ENCODE measurements at regions of chr12 and their contacts with region 1.

Region 1: DNA sequence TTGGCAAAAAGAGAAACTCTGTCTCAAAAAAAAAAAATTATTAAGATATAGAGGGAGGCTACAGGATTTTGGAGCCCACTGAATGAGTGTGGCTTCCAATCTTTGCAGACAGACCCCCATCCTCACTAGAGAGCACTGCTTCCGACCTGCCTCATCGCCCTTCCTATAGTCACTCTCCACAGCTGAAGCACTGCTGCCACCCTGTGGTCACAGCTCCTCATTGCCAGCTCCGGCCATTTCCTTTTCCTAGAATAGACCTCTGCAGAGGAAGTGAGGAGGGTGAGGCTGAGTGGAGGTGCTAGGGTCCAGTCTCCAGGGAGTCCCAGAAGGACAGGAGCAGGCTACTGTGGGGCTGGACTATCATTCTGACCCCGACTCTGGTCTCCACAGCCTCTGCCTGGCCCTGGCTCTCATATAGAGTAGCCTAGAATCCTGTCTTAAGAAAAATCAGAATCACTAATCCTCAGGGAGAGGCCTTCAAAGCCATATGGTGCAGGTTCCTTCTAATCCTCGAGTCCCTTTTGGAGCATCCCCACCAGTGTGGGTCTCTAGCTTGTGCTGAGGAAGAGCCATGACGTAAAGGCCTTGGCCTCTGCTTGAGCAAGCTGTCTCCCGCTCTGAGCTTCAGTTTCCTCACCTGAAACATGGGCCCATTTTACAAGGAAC is 1.4 kb upstream of the NPFF start:
- DNase-seq: peak; percentile 69 to 78 (median 75)
- H3K4me3 ChIP-seq: no peak overlapping the region
- H3K4me3 Mint-ChIP-seq: peak overlapping the region in 1 of 8 donors; percentile 2
- H3K27ac ChIP-seq: peak overlapping the region; percentile 16
- H3K27ac Mint-ChIP-seq: peak overlapping the region; percentile 14 to 70 (median 47)
- H3K4me1 ChIP-seq: peaks cover 10% of the 10 kb centered on the region
- H3K4me1 Mint-ChIP-seq: peaks cover 5 to 16% (median 8%) of the 10 kb centered on the region in 4 donors
- H3K27me3 ChIP-seq: no peaks in the 10 kb centered on the region
- H3K27me3 Mint-ChIP-seq: no peaks in the 10 kb centered on the region

Region 2: DNA sequence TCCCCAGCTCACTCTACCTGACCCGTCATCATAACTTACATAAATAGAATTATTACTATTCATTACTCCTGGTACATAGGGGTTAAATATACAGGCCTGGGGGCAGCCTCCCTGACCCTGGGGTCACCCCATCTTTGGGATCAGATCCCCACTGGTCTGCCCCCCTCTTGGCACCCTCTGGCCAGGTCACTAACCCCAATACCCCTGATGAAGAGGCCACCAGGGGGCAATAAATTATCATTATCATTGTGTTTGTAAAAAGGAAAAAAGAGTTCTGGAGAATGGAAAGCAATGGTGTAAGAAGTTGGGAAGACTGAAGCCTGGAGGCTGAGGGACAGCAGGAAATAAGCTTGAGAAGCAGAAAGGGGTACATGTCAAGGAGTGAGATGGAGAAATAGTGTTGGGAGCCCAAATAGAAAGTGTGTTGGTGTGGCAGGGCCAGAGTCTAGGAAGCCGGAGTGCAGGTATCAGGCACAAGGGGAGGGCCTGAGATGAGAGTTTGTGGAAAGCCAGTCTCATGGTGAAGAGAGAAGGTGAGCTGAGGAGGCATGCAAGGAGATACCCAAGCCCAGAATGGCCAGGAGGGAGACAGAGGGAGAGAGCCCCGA is 181.1 kb before region 1 on chr12:
- CTCF ChIA-PET with region 1: interaction called, 11 read pairs
- POLR2A ChIA-PET with region 1: interaction called, 5 read pairs
- intact Hi-C with region 1: loop called (anchors 1 kb)
- DNase-seq: no peak
- H3K4me3 ChIP-seq: no peak overlapping the region
- H3K4me3 Mint-ChIP-seq: peak overlapping the region in 4 of 8 donors; percentile 12 to 87 (median 43)
- H3K27ac ChIP-seq: no peak overlapping the region
- H3K27ac Mint-ChIP-seq: peak overlapping the region in 2 of 7 donors; percentile 23 to 72
- H3K4me1 ChIP-seq: peaks cover 23% of the 10 kb centered on the region
- H3K4me1 Mint-ChIP-seq: peaks cover 7 to 28% (median 14%) of the 10 kb centered on the region in 4 donors
- H3K27me3 ChIP-seq: no peaks in the 10 kb centered on the region
- H3K27me3 Mint-ChIP-seq: peaks cover 3 to 13% of the 10 kb centered on the region in 2 donors

Region 3: DNA sequence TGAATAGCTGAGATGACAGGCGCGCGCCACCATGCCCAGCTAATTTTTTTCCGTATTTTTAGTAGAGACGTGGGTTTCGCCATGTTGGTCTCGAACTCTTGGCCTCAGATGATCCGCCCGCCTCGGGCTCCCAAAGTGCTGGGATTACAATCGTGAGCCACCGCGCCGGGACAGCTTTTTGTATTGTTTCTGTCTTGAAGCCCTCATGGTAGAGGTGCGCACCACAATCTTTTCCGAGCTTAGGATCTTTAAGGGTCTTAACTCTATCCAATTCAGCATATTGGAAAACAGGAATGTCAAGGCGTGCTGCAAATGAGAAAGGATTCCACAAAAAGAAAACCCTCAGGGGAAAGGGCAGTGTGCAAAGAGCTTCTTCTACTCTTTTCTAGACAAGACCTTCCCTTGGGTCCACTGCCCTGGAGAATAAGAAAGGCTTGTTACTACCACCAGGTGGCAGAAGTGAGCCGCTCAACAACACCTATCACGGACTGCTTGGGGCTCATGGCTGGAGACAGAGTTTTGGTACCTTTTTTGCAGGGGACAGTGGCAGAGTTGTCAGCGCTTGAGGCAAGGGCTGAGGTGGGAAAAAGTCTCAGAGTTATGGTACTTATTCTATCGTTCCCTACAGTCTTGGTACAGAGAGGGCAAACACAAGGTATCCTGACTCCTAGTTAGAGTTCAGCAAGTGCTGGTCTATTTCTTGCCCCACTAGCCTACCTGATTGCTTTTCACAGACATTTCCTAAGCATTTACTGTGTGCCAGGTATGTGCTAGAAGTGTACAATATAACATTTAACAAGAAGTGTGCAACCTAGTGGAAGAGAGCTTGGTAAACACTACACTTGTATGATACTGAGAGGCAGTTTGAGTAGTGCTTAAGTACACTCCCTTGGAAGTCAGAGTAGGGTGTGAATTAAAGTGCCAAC is 156.1 kb before region 1 on chr12:
- CTCF ChIA-PET with region 1: interaction called, 93 read pairs
- POLR2A ChIA-PET with region 1: interaction called, 4 read pairs
- intact Hi-C with region 1: no loop called
- DNase-seq: peak; percentile 82 to 84 (median 84)
- H3K4me3 ChIP-seq: no peak overlapping the region
- H3K4me3 Mint-ChIP-seq: peak overlapping the region in 2 of 8 donors; percentile 1 to 7
- H3K27ac ChIP-seq: no peak overlapping the region
- H3K27ac Mint-ChIP-seq: peak overlapping the region in 4 of 7 donors; percentile 1 to 70 (median 26)
- H3K4me1 ChIP-seq: no peaks in the 10 kb centered on the region
- H3K4me1 Mint-ChIP-seq: peaks cover 4 to 7% (median 6%) of the 10 kb centered on the region in 4 donors
- H3K27me3 ChIP-seq: no peaks in the 10 kb centered on the region
- H3K27me3 Mint-ChIP-seq: no peaks in the 10 kb centered on the region

Region 4: GRCh38 chr12:53414756-53415417 is 93.8 kb before region 1 on chr12:
- CTCF ChIA-PET with region 1: interaction called, 56 read pairs
- POLR2A ChIA-PET with region 1: interaction called, 3 read pairs
- intact Hi-C with region 1: no loop called
- DNase-seq: no peak
- H3K4me3 ChIP-seq: no peak overlapping the region
- H3K4me3 Mint-ChIP-seq: no peak overlapping the region
- H3K27ac ChIP-seq: no peak overlapping the region
- H3K27ac Mint-ChIP-seq: peak overlapping the region; percentile 13 to 86 (median 48)
- H3K4me1 ChIP-seq: peaks cover 29% of the 10 kb centered on the region
- H3K4me1 Mint-ChIP-seq: peaks cover 26 to 43% (median 32%) of the 10 kb centered on the region in 4 donors
- H3K27me3 ChIP-seq: no peaks in the 10 kb centered on the region
- H3K27me3 Mint-ChIP-seq: no peaks in the 10 kb centered on the region

Region 5: GRCh38 chr12:53441040-53441833 is 67.4 kb before region 1 on chr12 and contains the start of gene PRR13:
- CTCF ChIA-PET with region 1: interaction called, 5 read pairs
- POLR2A ChIA-PET with region 1: interaction called, 12 read pairs
- intact Hi-C with region 1: loop called (anchors 1 kb)
- DNase-seq: peak; percentile 95 to 100 (median 97)
- H3K4me3 ChIP-seq: peak within 1 kb of the TSS; percentile 75 to 91
- H3K4me3 Mint-ChIP-seq: peak within 1 kb of the TSS; percentile 95 to 99 (median 97)
- H3K27ac ChIP-seq: peak within 1 kb of the TSS; percentile 98
- H3K27ac Mint-ChIP-seq: peak within 1 kb of the TSS; percentile 91 to 99 (median 96)
- H3K4me1 ChIP-seq: peaks cover 40% of the 10 kb centered on the region
- H3K4me1 Mint-ChIP-seq: peaks cover 22 to 59% (median 40%) of the 10 kb centered on the region in 4 donors
- H3K27me3 ChIP-seq: no peaks in the 10 kb centered on the region
- H3K27me3 Mint-ChIP-seq: no peaks in the 10 kb centered on the region
- total RNA-seq, gene PRR13: 242 to 247 TPM

Region 6: DNA sequence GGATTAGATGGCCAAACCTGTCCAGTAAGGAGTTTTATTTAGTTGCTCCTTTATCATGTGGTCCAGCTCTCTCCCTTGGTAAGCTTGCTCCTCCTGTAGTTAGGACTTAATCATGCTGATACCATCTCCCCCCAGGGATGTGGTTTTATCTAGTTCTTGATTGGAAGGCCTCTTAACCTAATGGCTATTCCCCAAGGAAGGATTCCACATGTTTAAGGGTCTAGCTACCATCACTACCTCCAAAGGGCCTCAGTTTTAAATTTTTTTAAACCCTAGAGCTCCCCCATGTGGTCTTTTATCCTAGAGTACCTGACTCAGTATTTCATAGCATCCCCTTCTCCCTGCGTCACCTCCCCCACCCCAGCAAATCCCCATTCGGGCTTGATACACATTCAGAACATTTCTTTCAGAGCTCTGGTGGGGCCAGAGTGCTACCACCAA is 31.9 kb before region 1 on chr12:
- CTCF ChIA-PET with region 1: interaction called, 74 read pairs
- POLR2A ChIA-PET with region 1: interaction called, 5 read pairs
- intact Hi-C with region 1: loop called (anchors 2 kb)
- DNase-seq: peak in 1 of 5 donors; percentile 15
- H3K4me3 ChIP-seq: no peak overlapping the region
- H3K4me3 Mint-ChIP-seq: no peak overlapping the region
- H3K27ac ChIP-seq: no peak overlapping the region
- H3K27ac Mint-ChIP-seq: peak overlapping the region in 6 of 7 donors; percentile 2 to 82 (median 32)
- H3K4me1 ChIP-seq: peaks cover 50% of the 10 kb centered on the region
- H3K4me1 Mint-ChIP-seq: peaks cover 31 to 50% (median 33%) of the 10 kb centered on the region in 4 donors
- H3K27me3 ChIP-seq: no peaks in the 10 kb centered on the region
- H3K27me3 Mint-ChIP-seq: no peaks in the 10 kb centered on the region

Region 7: DNA sequence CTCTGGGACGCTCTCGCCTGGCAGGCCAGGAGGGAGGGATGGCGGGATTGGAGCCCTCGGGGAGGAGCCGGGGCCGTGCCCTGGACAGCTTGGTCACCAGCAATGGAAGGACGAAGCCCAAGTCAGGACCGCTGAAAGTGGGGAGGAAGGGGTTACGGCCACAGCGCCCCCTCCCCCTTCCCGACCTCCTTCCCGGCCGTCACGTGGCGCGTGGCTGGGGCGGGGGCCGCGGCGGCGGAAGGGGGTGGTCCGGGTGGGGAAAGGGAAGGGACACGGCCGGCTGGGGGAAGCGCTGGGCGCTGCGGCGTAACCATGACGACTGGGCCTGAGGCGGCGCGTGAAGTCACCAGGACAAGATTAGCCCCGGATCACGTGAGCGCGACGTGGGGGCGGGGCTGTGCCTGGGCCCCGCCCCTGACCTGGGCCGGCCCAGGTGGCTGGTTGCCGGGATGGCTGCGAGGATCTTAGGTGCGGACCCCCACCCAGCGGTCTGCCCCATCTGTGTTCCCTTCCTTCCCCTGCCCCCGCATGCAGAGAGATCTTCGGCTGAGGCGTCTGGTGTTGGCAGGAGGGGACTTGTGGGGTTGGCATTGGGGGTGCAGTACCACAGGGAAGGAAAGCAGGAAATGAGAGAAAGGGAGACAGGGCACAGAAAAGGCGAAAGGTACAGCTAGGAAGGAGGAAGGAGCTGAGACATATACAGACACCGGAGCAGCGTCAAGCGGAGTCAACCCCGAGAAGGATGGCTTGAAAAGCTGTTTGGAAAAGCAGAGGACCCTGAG is 15.6 kb before region 1 on chr12:
- CTCF ChIA-PET with region 1: interaction called, 27 read pairs
- POLR2A ChIA-PET with region 1: interaction called, 36 read pairs
- intact Hi-C with region 1: no loop called
- DNase-seq: peak; percentile 82 to 91 (median 83)
- H3K4me3 ChIP-seq: peak overlapping the region; percentile 45 to 93
- H3K4me3 Mint-ChIP-seq: peak overlapping the region; percentile 88 to 98 (median 90)
- H3K27ac ChIP-seq: peak overlapping the region; percentile 75
- H3K27ac Mint-ChIP-seq: peak overlapping the region; percentile 86 to 99 (median 96)
- H3K4me1 ChIP-seq: peaks cover 26% of the 10 kb centered on the region
- H3K4me1 Mint-ChIP-seq: peaks cover 15 to 56% (median 39%) of the 10 kb centered on the region in 4 donors
- H3K27me3 ChIP-seq: no peaks in the 10 kb centered on the region
- H3K27me3 Mint-ChIP-seq: no peaks in the 10 kb centered on the region

Measured in CD4-positive, alpha-beta memory T cell (primary cell).